ENCODE measurements at regions of chr3 and their contacts with region 1.

Region 1: DNA sequence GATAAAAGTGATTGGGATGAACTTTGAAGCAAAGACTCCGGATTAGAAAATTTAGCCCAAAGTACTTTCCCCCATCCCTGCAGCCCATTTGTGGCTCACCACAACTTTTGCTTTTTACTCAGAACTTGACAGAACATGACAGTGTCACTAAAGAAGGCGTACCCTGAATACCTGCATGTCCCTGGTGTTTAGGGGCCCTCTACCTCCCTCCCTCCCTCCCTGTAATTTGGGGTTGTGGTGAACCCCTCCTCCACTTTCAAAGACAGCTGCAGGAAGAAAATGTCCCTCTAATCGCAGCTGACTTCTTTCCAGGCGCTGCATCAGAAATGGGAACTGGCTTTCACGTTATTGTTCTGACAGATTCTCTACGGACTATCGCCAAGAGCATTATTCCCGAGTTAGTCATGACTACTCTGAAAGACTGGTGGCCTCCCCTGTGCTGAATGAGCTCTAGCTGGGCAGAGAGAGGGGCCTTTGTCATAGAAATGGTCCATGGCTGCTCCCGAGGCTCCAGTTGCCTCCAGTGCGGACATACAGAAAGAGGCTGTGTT is 93.2 kb upstream of the ARHGEF3 start:
- DNase-seq: no peak
- H3K4me3 ChIP-seq: no peak overlapping the region
- H3K27ac ChIP-seq: peak overlapping the region in 1 of 4 donors; percentile 45
- H3K4me1 ChIP-seq: peaks cover 0 to 11% (median 1%) of the 10 kb centered on the region in 4 donors
- H3K27me3 ChIP-seq: no peaks in the 10 kb centered on the region
- CTCF ChIP-seq: no peak
- EP300 ChIP-seq: no peak
- POLR2A ChIP-seq: no peak

Region 2: DNA sequence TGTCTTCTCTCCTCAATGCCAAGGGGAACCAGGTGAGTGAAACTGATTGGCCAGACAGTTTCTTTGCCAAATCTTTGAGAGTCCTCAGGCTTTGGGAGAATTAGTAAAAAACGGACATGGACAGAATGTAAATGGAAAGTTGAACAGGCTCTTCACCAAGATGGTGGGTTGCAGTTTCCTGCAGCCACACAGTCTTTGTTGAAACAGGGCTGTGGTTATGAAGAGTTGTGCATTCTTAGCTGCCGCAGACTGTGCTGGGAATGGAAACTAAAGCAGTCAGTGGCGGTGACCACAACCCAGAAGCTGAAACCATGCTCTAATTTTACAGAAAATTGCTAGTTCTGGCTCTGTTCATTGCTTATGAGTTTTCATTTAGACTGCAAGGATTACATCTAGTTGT is 169.8 kb before region 1 on chr3:
- intact Hi-C with region 1: no loop called
- DNase-seq: no peak
- H3K4me3 ChIP-seq: no peak overlapping the region
- H3K27ac ChIP-seq: no peak overlapping the region
- H3K4me1 ChIP-seq: peaks cover 0 to 2% (median 0%) of the 10 kb centered on the region in 4 donors
- H3K27me3 ChIP-seq: no peaks in the 10 kb centered on the region
- CTCF ChIP-seq: no peak
- EP300 ChIP-seq: no peak
- POLR2A ChIP-seq: no peak

Region 3: GRCh38 chr3:57370341-57370740 is 475.4 kb after region 1 on chr3:
- intact Hi-C with region 1: loop called (anchors 10 kb)
- DNase-seq: no peak
- H3K4me3 ChIP-seq: no peak overlapping the region
- H3K27ac ChIP-seq: no peak overlapping the region
- H3K4me1 ChIP-seq: no peaks in the 10 kb centered on the region
- H3K27me3 ChIP-seq: no peaks in the 10 kb centered on the region
- CTCF ChIP-seq: no peak
- EP300 ChIP-seq: no peak
- POLR2A ChIP-seq: no peak

Measured in sigmoid colon (tissue), 7 donors.